ENCODE measurements at regions of chr6 and their contacts with region 1.

Region 1: DNA sequence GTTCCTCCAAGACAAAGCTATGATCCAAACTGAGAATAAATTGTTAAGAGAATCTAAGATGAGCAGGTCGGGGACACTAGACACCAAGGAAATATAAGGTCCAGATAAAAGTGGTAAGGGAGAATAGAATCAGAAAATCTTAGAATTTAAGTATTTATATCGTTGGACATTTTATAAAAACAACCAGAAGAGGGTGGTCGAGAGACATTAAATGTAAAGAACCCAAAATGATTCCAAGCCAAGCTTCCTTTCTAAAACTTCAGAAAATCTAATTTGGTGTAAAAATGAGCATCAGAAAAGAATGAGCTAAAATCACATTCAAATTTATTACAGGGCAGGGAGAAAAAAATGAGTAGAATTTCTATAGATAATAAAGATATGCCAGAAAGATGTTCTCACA is 97.8 kb upstream of the OGFRL1 start:
- DNase-seq: peak; percentile 67
- H3K4me3 ChIP-seq: no peak overlapping the region
- H3K27ac ChIP-seq: no peak overlapping the region
- H3K4me1 ChIP-seq: no peaks in the 10 kb centered on the region
- CTCF ChIP-seq: peak; percentile 87

Region 2: DNA sequence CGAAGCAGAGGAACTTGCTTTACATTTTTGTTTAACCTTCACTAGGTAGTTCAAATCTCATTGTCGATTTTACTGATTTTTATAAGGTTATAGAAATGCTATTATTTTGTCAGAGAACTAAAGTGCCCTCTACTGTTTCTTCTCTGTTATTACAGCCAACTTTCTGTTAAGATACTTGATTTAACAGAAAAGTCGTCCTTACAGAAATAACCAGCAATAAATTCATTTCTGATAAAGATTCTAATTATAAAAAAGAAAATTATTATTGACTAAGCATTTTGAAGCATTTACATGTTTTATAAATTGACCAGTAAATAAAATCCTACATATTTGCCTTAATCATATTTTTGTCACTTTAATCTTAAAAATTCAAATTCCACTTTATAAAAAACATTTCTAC is 158.6 kb after region 1 on chr6:
- CTCF ChIA-PET with region 1: no interaction called
- POLR2A ChIA-PET with region 1: interaction called, 4 read pairs
- intact Hi-C with region 1: loop called (anchors 1 kb)
- DNase-seq: peak; percentile 61
- H3K4me3 ChIP-seq: no peak overlapping the region
- H3K27ac ChIP-seq: no peak overlapping the region
- H3K4me1 ChIP-seq: peaks cover 4% of the 10 kb centered on the region
- CTCF ChIP-seq: peak; percentile 96